ENCODE measurements at regions of chr6 and their contacts with region 1.

Region 1: GRCh38 chr6:129490521-129491245 is 219.3 kb downstream of the ARHGAP18 start:
- DNase-seq: peak in 34 of 35 experiments; percentile 8 to 90 (median 50)
- ATAC-seq: peak; percentile 93 to 97 (median 95)
- H3K4me3 ChIP-seq: peak overlapping the region in 1 of 2 donors; percentile 34
- H3K4me3 Mint-ChIP-seq: peak overlapping the region; percentile 68 to 74 (median 73)
- H3K27ac ChIP-seq: peak overlapping the region; percentile 91
- H3K27ac Mint-ChIP-seq: peak overlapping the region; percentile 94 to 95
- H3K4me1 ChIP-seq: peaks cover 15 to 20% of the 10 kb centered on the region in 2 experiments
- H3K4me1 Mint-ChIP-seq: peaks cover 26 to 35% (median 29%) of the 10 kb centered on the region in 3 donors
- H3K27me3 ChIP-seq: no peaks in the 10 kb centered on the region
- H3K27me3 Mint-ChIP-seq: no peaks in the 10 kb centered on the region

Region 2: DNA sequence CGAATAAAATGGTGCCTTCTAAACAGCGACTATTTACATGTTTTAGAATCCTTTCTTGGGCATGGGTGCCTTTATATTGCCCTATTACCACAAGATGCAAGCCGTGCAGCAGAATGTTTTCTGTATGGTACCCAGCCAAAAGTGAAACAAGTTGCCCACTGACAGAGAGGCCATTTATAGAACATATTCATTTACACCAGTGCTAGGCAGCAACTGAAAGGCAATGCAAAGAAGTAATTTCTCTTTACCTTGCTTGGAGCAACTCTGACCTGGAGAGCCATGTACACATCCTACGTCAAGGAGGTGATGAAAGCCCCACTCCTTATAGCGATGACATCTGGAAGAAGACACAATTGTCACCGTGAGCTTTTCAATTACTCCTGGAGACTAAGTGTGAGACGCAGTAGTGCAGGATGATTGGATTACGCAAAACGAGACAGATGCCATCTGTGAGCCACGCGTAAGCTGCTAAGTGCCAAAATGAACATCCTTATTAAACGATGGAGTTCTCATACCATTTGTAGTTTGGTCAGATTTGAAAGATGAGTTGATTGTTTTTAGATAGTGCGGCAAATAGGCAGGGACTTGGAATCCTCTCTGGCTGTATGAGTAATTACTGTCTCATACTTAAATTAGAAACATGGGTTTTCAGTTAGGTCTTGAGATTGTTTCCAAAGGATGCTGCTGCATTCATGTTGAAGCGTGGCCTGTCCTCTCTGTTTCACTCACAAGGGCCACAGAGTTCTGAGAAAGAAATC is 370.4 kb after region 1 on chr6 and contains the start of gene TMEM244:
- CTCF ChIA-PET with region 1: no interaction called
- POLR2A ChIA-PET with region 1: interaction called in 1 of 2 experiments, 13 read pairs
- DNase-seq: peak in 7 of 35 experiments; percentile 0 to 49 (median 4)
- ATAC-seq: peak in 3 of 4 experiments; percentile 43 to 76 (median 65)
- H3K4me3 ChIP-seq: peak within 1 kb of the TSS; percentile 7 to 33
- H3K4me3 Mint-ChIP-seq: peak within 1 kb of the TSS; percentile 68 to 82 (median 76)
- H3K27ac ChIP-seq: peak within 1 kb of the TSS; percentile 66
- H3K27ac Mint-ChIP-seq: peak within 1 kb of the TSS; percentile 85 to 91
- H3K4me1 ChIP-seq: peaks cover 0 to 2% of the 10 kb centered on the region in 2 experiments
- H3K4me1 Mint-ChIP-seq: peaks cover 8 to 15% (median 14%) of the 10 kb centered on the region in 3 donors
- H3K27me3 ChIP-seq: no peaks in the 10 kb centered on the region
- H3K27me3 Mint-ChIP-seq: no peaks in the 10 kb centered on the region
- total RNA-seq, gene TMEM244: 0.53 to 1.2 TPM in 2 of 5 donors, not detected in the others

Region 3: GRCh38 chr6:130020907-130021629 is 530.4 kb after region 1 on chr6:
- CTCF ChIA-PET with region 1: interaction called in 1 of 2 experiments, 3 read pairs
- POLR2A ChIA-PET with region 1: interaction called in 1 of 2 experiments, 17 read pairs
- DNase-seq: peak; percentile 45 to 92 (median 72)
- ATAC-seq: peak; percentile 52 to 60 (median 56)
- H3K4me3 ChIP-seq: peak overlapping the region; percentile 83 to 87
- H3K4me3 Mint-ChIP-seq: peak overlapping the region; percentile 96 to 100 (median 98)
- H3K27ac ChIP-seq: peak overlapping the region; percentile 89
- H3K27ac Mint-ChIP-seq: peak overlapping the region; percentile 97
- H3K4me1 ChIP-seq: peaks cover 6 to 9% of the 10 kb centered on the region in 2 experiments
- H3K4me1 Mint-ChIP-seq: peaks cover 44 to 46% (median 44%) of the 10 kb centered on the region in 3 donors
- H3K27me3 ChIP-seq: no peaks in the 10 kb centered on the region
- H3K27me3 Mint-ChIP-seq: no peaks in the 10 kb centered on the region